ENCODE measurements at regions of chr7 and their contacts with region 1.

Region 1: DNA sequence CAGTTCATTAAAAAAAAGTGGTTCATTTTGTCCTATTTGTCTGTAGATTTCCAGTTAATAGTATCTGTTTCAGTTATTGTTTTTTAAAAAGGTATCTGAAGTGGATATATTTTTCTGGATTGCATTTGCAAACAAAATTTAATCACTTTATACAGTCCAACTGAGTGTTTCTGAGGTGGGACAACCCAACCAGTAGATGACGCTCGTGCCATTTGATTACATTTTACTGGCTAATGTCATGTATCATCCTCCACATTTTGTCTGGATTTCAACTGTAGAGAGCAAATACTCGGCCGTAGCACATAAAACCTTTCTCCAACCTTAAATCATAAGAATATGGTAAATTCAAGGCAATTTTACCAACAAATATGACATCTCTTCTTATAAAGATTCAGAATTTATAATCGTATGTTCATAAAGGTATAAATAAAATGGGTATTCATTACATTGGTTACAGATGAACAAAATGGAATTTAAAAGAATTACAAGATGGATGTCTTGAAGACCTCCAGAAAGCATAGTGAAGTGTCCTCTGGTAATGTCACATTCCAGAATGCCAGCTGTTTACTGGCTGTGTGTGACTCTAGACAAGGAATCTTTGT is 789.0 kb downstream of the PHTF2 start:
- DNase-seq: no peak
- H3K4me3 ChIP-seq: no peak overlapping the region
- H3K27ac ChIP-seq: no peak overlapping the region
- H3K4me1 ChIP-seq: no peaks in the 10 kb centered on the region
- H3K27me3 ChIP-seq: no peaks in the 10 kb centered on the region
- CTCF ChIP-seq: no peak
- POLR2A ChIP-seq: no peak

Region 2: GRCh38 chr7:78562191-78562590 is 25.4 kb before region 1 on chr7:
- intact Hi-C with region 1: loop called (anchors 2 kb)
- DNase-seq: no peak
- H3K4me3 ChIP-seq: no peak overlapping the region
- H3K27ac ChIP-seq: no peak overlapping the region
- H3K4me1 ChIP-seq: no peaks in the 10 kb centered on the region
- H3K27me3 ChIP-seq: no peaks in the 10 kb centered on the region
- CTCF ChIP-seq: no peak
- POLR2A ChIP-seq: no peak

Region 3: GRCh38 chr7:78939669-78940068 is 352.1 kb after region 1 on chr7:
- intact Hi-C with region 1: no loop called
- DNase-seq: no peak
- H3K4me3 ChIP-seq: no peak overlapping the region
- H3K27ac ChIP-seq: no peak overlapping the region
- H3K4me1 ChIP-seq: no peaks in the 10 kb centered on the region
- H3K27me3 ChIP-seq: no peaks in the 10 kb centered on the region
- CTCF ChIP-seq: no peak
- POLR2A ChIP-seq: no peak

Region 4: DNA sequence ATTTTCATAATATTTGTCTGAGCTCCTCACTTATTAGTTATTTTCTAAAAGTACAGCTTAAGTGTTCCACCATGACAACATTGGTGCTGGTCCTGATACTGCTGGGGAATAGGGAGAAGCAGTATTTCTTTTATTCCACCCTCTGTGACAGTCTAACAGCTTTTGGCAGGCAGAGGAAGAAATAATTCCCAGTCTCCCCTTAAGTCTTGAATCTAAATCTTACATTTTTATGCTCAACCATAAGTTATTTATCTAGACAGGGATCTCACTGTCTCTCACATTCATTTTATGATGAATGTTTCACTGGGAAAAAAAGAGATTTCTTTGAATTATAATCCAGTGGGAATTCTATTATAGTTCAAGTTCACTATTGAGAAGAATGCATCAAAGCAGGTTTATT is 794.4 kb after region 1 on chr7:
- intact Hi-C with region 1: loop called (anchors 5 kb)
- DNase-seq: no peak
- H3K4me3 ChIP-seq: no peak overlapping the region
- H3K27ac ChIP-seq: no peak overlapping the region
- H3K4me1 ChIP-seq: no peaks in the 10 kb centered on the region
- H3K27me3 ChIP-seq: no peaks in the 10 kb centered on the region
- CTCF ChIP-seq: no peak
- POLR2A ChIP-seq: no peak